ENCODE measurements at regions of chr2 and their contacts with region 1.

Region 1: DNA sequence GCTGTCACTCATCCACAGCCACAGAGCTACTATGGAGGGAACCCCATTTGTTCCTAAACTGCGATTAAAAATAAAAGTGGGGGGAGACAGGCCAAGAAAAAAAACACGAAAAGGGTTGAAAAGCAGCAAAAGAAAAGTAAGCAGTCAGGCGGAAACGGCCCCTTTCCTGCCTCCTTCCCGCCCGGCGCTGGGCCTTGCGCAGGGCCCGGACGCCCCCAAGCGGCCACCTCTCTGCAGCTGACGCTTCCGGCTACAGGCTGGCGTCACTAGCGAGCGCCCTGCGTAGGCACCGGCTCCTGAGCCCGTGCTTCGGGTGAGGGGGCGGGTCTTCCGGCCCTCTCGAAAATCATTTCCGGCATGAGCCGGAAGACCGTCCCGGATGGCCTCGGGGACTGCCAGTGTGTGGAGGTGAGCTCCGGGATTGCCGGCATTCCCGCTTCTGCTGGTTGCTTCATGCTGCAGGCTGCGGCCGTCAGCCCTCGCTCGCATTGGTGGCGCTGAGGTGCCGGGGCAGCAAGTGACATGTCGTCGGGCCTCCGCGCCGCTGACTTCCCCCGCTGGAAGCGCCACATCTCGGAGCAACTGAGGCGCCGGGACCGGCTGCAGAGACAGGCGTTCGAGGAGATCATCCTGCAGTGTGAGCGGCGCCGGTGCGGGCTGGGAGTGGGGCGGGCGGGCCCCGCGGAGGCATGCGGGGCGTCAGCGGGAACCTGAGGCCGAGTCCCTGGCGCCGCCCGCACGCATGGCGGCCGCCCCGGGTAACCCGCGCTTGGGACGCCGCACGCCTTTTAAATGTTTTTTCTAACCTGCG is at the start of gene ATG16L1:
- DNase-seq: peak; percentile 96
- H3K4me3 Mint-ChIP-seq: peak within 1 kb of the TSS; percentile 86
- H3K27ac Mint-ChIP-seq: peak within 1 kb of the TSS; percentile 74
- H3K4me1 Mint-ChIP-seq: peaks cover 28% of the 10 kb centered on the region
- H3K27me3 Mint-ChIP-seq: no peaks in the 10 kb centered on the region
- CTCF ChIP-seq: peak; percentile 92
- total RNA-seq, gene ATG16L1: 26.4 and 28.7 TPM in 2 replicates

Region 2: DNA sequence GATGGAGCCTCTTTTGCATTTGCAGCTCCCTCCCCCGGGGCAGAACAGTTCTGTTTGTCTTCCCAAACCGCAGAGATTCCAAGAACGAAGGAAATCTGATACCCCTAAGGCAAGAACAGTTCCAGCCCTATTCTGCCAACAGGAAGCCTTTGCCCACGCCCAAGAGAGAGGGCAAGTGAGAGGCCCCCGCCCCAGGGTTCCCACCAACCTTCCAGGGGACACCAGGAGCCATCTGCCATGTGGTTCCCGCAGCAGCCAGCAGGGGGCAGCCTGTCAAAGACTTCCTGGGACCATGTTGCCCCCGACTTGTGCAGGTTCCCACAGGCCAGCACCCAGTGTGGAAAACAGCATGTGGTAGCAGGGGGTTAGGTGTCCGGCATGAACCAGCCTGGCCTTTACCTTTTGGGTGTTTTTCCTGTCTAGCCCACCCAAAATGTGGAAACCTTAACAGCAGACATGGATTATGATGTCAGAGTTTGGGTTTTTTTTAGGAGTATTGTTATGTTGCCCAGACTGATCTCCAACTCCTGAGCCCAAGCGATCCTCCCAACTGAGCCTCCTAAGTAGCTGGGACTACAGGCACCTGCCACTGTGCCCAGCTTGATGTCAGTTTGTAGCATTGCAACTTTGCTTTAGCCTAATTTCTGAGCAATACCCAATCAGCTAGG is 639.8 kb before region 1 on chr2:
- CTCF ChIA-PET with region 1: interaction called, 4 read pairs
- POLR2A ChIA-PET with region 1: interaction called, 3 read pairs
- intact Hi-C with region 1: loop called (anchors 1 kb)
- DNase-seq: peak; percentile 96
- H3K4me3 Mint-ChIP-seq: no peak overlapping the region
- H3K27ac Mint-ChIP-seq: no peak overlapping the region
- H3K4me1 Mint-ChIP-seq: peaks cover 9% of the 10 kb centered on the region
- H3K27me3 Mint-ChIP-seq: no peaks in the 10 kb centered on the region
- CTCF ChIP-seq: peak; percentile 82

Region 3: DNA sequence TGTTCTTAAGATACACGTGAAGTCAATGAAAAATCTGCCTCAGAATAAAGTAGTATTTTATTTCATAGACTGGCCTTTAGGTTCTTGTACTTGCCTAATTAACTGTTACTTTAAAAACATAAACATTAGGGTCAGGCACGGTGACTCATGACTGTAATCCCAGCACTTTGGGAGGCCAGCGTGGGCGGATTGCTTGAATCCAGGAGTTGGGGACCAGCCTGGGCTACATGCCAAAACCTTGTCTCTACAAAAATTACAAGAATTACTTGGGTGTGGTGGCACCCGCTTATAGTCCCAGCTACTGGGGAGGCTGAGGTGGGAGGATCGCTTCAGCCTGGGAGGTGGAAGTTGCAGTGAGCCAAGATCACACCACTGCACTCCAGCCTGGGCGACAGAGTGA is 397.4 kb before region 1 on chr2:
- CTCF ChIA-PET with region 1: interaction called, 23 read pairs
- POLR2A ChIA-PET with region 1: interaction called, 24 read pairs
- intact Hi-C with region 1: loop called (anchors 1 kb)
- DNase-seq: peak; percentile 97
- H3K4me3 Mint-ChIP-seq: no peak overlapping the region
- H3K27ac Mint-ChIP-seq: no peak overlapping the region
- H3K4me1 Mint-ChIP-seq: peaks cover 28% of the 10 kb centered on the region
- H3K27me3 Mint-ChIP-seq: no peaks in the 10 kb centered on the region
- CTCF ChIP-seq: no peak

Region 4: GRCh38 chr2:232994446-232994845 is 257.1 kb before region 1 on chr2:
- CTCF ChIA-PET with region 1: no interaction called
- POLR2A ChIA-PET with region 1: no interaction called
- intact Hi-C with region 1: no loop called
- DNase-seq: no peak
- H3K4me3 Mint-ChIP-seq: no peak overlapping the region
- H3K27ac Mint-ChIP-seq: no peak overlapping the region
- H3K4me1 Mint-ChIP-seq: peaks cover 4% of the 10 kb centered on the region
- H3K27me3 Mint-ChIP-seq: no peaks in the 10 kb centered on the region
- CTCF ChIP-seq: no peak

Region 5: DNA sequence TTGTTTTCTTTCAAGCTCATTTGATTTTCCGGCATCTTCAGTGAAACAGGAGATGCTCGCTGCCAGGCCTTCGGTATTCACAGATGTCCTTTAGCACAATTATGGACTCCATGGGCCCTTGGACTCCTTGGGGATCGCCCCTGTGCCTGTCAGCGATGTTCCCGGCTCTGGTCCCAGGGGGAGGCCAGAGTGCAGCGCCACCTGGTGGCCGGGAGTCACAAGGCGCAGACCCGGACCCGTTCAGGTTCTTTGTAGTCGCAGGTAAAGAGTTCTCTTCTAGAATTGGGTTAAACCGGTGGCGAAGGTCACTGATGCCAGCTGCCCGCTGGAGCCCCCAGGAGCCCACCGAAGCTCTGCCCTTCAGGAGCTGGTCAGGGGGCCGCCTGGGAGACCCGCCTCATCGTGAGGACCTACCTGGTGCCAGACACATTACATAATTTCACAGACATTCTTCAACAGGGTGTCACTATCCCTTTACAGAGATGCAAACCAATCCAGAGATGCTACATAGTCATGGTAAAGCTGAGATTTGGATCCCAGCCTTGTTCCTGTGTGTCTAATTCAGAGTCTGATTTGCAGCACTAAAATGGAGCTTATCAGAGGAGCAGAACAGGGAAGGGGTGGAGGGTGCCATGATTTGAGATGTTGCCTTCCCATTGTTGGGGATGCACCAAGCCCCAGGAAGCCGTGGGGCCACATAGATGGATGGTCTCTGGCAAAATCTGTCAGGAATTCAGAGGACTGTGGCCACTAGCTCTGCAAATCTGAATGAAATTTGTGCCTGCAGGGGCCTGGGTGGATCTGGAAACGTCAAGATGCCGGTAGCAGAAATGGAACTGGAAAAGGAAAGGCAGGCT is 197.4 kb before region 1 on chr2:
- CTCF ChIA-PET with region 1: interaction called, 6 read pairs
- POLR2A ChIA-PET with region 1: no interaction called
- intact Hi-C with region 1: loop called (anchors 5 kb)
- DNase-seq: peak; percentile 61
- H3K4me3 Mint-ChIP-seq: no peak overlapping the region
- H3K27ac Mint-ChIP-seq: no peak overlapping the region
- H3K4me1 Mint-ChIP-seq: peaks cover 35% of the 10 kb centered on the region
- H3K27me3 Mint-ChIP-seq: no peaks in the 10 kb centered on the region
- CTCF ChIP-seq: peak; percentile 88

Region 6: GRCh38 chr2:233261819-233262555 is 10.5 kb after region 1 on chr2:
- CTCF ChIA-PET with region 1: interaction called, 10 read pairs
- POLR2A ChIA-PET with region 1: interaction called, 3 read pairs
- intact Hi-C with region 1: no loop called
- DNase-seq: no peak
- H3K4me3 Mint-ChIP-seq: no peak overlapping the region
- H3K27ac Mint-ChIP-seq: peak overlapping the region; percentile 14
- H3K4me1 Mint-ChIP-seq: no peaks in the 10 kb centered on the region
- H3K27me3 Mint-ChIP-seq: no peaks in the 10 kb centered on the region
- CTCF ChIP-seq: no peak

Region 7: DNA sequence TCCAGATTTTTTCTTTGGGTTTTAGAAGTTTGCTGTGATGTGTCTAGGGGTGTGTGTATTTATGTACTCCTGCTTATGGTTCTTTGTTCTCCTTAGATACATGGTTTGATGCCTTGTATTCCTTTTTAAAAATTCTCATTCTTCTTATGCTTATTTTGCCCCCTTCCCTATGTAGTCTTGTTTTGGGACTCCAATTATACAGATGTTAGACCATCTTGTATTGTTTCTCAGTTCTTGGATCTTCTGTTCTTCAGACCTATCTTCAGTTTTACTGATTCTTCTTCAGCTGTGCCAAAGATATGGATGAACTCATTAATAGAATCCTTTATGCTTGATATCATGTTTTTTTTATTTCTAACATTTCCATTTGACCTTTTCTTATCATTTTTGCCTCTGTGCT is 630.8 kb after region 1 on chr2:
- CTCF ChIA-PET with region 1: no interaction called
- POLR2A ChIA-PET with region 1: no interaction called
- intact Hi-C with region 1: no loop called
- DNase-seq: no peak
- H3K4me3 Mint-ChIP-seq: no peak overlapping the region
- H3K27ac Mint-ChIP-seq: no peak overlapping the region
- H3K4me1 Mint-ChIP-seq: no peaks in the 10 kb centered on the region
- H3K27me3 Mint-ChIP-seq: peaks cover 2% of the 10 kb centered on the region
- CTCF ChIP-seq: no peak

Measured in MCF 10A (cell line).